ENCODE measurements at regions of chrX and their contacts with region 1.

Region 1: DNA sequence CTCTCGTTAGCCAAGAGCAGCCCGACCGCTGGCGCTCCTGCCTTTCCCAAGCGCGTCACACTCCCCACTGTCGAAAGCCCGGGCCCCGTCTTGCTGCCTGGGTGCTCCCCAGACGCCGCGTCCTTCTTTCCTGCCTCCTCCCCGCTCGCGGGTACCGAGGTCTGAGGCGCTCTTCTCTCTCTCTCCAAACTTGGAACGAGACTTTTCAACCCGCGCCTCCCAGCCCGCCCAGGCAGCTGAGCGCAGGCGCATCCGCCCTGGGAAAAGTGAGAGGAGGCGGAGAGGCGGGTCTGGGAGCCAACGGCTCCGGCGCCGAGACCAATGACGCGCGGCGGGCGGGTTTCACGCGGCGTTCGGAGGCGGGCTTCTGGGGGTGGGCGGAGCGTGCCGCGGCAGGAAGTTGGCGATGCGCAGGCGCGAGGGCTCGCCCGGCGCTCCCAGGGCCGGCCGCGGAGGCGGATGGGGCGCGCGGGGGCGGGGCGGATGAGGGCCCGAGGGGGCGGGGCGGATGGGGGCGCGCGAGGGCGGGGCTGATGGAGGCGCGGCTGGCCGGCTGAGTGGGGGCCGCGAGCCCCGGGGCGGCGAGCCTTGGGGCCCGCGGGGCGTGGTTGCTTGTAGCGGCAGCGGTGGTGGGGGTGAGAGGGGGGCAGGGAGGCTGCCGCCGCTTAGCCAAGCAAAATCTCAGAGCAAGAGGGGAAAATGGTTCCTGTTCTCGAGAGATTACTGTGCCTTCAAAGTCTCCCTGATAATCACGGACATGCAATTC is at the start of gene RBBP7:
- DNase-seq: peak; percentile 91
- H3K4me3 Mint-ChIP-seq: peak within 1 kb of the TSS; percentile 96
- H3K27ac Mint-ChIP-seq: peak within 1 kb of the TSS; percentile 98
- H3K4me1 Mint-ChIP-seq: peaks cover 25% of the 10 kb centered on the region
- H3K27me3 Mint-ChIP-seq: no peaks in the 10 kb centered on the region
- total RNA-seq, gene RBBP7: 213 to 228 TPM

Region 2: DNA sequence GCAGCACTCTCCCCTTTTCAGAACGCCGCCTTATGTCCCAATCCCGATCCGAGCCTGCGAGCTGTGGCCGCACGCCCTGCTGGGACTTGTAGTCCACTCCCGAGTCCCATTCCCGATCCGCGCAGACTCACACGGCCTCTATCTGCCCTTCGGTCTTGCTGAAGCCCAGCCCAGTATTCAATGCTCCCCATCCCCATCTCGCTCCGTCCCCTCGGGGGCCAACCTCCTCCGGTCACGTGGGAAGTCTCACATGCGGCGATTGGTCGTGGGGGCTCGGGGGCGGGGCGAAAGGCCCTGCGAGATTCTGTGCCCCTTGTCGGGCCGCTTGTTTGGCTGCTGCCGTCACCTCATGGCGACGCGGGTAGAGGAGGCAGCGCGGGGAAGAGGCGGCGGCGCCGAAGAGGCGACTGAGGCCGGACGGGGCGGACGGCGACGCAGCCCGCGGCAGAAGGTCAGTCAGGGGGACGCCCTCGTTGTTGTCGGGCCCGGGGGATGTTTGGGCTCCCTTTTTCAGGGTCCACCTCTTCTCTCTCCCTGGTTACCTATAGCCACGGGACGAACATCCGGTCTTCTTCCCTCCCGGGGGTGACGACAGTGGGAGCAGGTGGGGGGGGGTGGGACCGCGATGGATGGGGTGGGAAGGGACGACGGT is 84.0 kb before region 1 on chrX and contains the start of gene TXLNG:
- CTCF ChIA-PET with region 1: no interaction called
- intact Hi-C with region 1: loop called (anchors 1 kb)
- DNase-seq: peak; percentile 95
- H3K4me3 Mint-ChIP-seq: peak within 1 kb of the TSS; percentile 83
- H3K27ac Mint-ChIP-seq: peak within 1 kb of the TSS; percentile 72
- H3K4me1 Mint-ChIP-seq: peaks cover 9% of the 10 kb centered on the region
- H3K27me3 Mint-ChIP-seq: no peaks in the 10 kb centered on the region
- total RNA-seq, gene TXLNG: 11.8 to 12.3 TPM

Region 3: GRCh38 chrX:16855363-16856075 is 14.8 kb before region 1 on chrX:
- CTCF ChIA-PET with region 1: no interaction called
- intact Hi-C with region 1: loop called (anchors 1 kb)
- DNase-seq: peak; percentile 31
- H3K4me3 Mint-ChIP-seq: peak overlapping the region; percentile 36
- H3K27ac Mint-ChIP-seq: peak overlapping the region; percentile 92
- H3K4me1 Mint-ChIP-seq: peaks cover 63% of the 10 kb centered on the region
- H3K27me3 Mint-ChIP-seq: no peaks in the 10 kb centered on the region

Region 4: GRCh38 chrX:16892504-16893362 is 22.5 kb after region 1 on chrX:
- CTCF ChIA-PET with region 1: interaction called, 3 read pairs
- intact Hi-C with region 1: loop called (anchors 1 kb)
- DNase-seq: peak; percentile 76
- H3K4me3 Mint-ChIP-seq: no peak overlapping the region
- H3K27ac Mint-ChIP-seq: peak overlapping the region; percentile 46
- H3K4me1 Mint-ChIP-seq: peaks cover 18% of the 10 kb centered on the region
- H3K27me3 Mint-ChIP-seq: no peaks in the 10 kb centered on the region

Region 5: GRCh38 chrX:16963216-16963615 is 92.9 kb after region 1 on chrX:
- CTCF ChIA-PET with region 1: no interaction called
- intact Hi-C with region 1: no loop called
- DNase-seq: no peak
- H3K4me3 Mint-ChIP-seq: no peak overlapping the region
- H3K27ac Mint-ChIP-seq: no peak overlapping the region
- H3K4me1 Mint-ChIP-seq: no peaks in the 10 kb centered on the region
- H3K27me3 Mint-ChIP-seq: no peaks in the 10 kb centered on the region

Region 6: GRCh38 chrX:17242470-17242869 is 372.2 kb after region 1 on chrX:
- CTCF ChIA-PET with region 1: no interaction called
- intact Hi-C with region 1: no loop called
- DNase-seq: peak; percentile 59
- H3K4me3 Mint-ChIP-seq: no peak overlapping the region
- H3K27ac Mint-ChIP-seq: no peak overlapping the region
- H3K4me1 Mint-ChIP-seq: no peaks in the 10 kb centered on the region
- H3K27me3 Mint-ChIP-seq: no peaks in the 10 kb centered on the region

Region 7: GRCh38 chrX:17814557-17814956 is 944.3 kb after region 1 on chrX:
- CTCF ChIA-PET with region 1: no interaction called
- intact Hi-C with region 1: no loop called
- DNase-seq: no peak
- H3K4me3 Mint-ChIP-seq: no peak overlapping the region
- H3K27ac Mint-ChIP-seq: no peak overlapping the region
- H3K4me1 Mint-ChIP-seq: no peaks in the 10 kb centered on the region
- H3K27me3 Mint-ChIP-seq: no peaks in the 10 kb centered on the region

Measured in activated naive CD4-positive, alpha-beta T cell treated with anti-CD3 and anti-CD28 coated beads for 36 hours (primary cell).